GM12878 (cell line): ENCODE measurements at regions of chr1 and their contacts with region 1.

Region 1: GRCh38 chr1:27257155-27257554 is 22.7 kb downstream of the WDTC1 start:
- DNase-seq: no peak
- ATAC-seq: no peak
- H3K4me3 ChIP-seq: no peak overlapping the region
- H3K27ac ChIP-seq: no peak overlapping the region
- H3K4me1 ChIP-seq: peaks cover 26% of the 10 kb centered on the region
- H3K27me3 ChIP-seq: no peaks in the 10 kb centered on the region
- CTCF ChIP-seq: no peak
- EP300 ChIP-seq: no peak
- POLR2A ChIP-seq: no peak
- RAD21 ChIP-seq: no peak

Region 2: DNA sequence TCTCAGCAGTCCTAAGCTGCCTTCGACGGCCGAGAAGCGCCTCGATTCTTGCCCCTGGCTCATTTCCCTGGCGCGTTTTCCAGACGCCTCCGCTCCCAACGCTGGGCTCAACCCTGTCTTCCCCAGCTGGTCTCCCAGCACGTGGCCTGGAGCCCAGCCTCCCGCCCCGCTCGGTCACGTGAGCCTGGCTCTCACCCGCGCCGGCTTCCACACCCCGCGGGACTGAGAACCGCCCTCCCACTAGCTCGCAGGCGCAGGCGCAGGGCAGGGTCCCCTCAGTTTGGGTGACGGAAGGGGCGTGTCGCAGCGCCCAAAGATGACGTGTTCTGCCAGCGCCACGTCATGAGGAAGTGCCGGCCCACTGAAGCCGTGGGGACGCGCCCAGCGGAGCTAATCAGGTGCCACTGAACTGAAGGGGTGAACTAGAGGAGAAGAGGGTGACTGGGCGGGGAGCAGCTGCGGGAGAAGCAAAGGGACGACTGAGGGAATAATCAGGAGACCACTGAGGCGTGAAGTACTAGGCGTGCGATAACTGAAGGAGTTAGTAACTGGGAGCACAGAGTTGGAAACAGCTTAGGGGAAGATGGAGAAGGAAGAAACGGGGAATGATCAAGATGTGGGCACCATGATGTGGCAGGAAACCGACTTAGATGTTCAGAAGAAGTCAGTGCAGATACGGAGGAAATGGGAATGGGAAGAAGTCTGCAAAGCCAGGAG is 825.0 kb before region 1 on chr1 and contains the start of gene DHDDS:
- CTCF ChIA-PET with region 1: no interaction called
- POLR2A ChIA-PET with region 1: no interaction called
- RAD21 ChIA-PET with region 1: no interaction called
- SMC1A ChIA-PET with region 1: no interaction called
- in situ Hi-C with region 1: no loop called
- intact Hi-C with region 1: no loop called
- DNase-seq: peak; percentile 95
- ATAC-seq: peak; percentile 99
- H3K4me3 ChIP-seq: peak within 1 kb of the TSS; percentile 98
- H3K27ac ChIP-seq: peak within 1 kb of the TSS; percentile 59
- H3K4me1 ChIP-seq: peaks cover 9% of the 10 kb centered on the region
- H3K27me3 ChIP-seq: no peaks in the 10 kb centered on the region
- CTCF ChIP-seq: no peak
- EP300 ChIP-seq: no peak
- POLR2A ChIP-seq: peak; percentile 96
- RAD21 ChIP-seq: no peak
- polyA plus RNA-seq, gene DHDDS: 22.7 to 27.2 TPM

Region 3: DNA sequence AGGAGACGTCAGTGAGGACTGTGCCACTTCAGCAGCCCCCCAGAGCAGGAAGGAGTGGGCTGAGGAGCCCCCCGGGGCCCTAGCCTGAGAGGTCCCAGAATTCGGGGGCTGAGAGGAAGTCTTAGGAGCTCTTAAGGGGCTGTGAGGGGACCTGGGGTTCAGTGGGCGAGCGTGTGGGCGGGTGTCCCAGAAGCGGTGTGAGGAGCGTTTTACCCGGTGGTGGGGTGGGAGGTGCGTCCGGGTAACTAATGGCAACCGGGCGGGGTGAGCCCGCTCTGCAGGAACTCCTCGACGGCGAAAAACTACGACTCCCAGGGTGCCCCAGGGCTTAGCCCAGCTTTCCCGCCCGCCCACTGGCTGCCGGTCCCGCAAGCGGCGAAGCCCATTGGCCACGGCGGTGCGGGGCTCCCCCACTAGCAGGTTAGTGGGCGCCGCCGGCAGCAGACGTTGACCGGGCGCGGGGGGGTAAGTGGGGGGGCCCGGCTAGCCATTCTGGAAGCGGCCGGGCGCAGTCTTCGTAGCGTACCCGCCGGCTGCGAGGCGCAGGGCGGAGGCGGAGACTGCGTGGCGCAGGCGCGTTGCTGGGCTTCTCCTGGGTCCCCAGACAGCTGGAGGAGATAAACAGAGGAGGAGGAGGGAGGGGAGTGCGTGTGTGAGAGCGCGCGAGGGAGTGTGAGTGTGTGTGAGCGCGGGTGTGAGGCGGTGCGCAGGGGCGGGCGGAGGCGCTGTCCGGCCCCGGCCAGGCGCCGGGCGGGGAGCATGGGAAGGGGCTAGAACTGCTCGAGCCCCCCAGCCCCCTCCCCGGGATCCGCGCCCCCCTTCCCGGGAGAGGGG is 22.9 kb before region 1 on chr1 and contains the start of gene WDTC1:
- CTCF ChIA-PET with region 1: interaction called, 3 read pairs
- POLR2A ChIA-PET with region 1: interaction called, 9 read pairs
- RAD21 ChIA-PET with region 1: interaction called, 8 read pairs
- SMC1A ChIA-PET with region 1: interaction called, 21 read pairs
- in situ Hi-C with region 1: no loop called
- intact Hi-C with region 1: loop called (anchors 2 kb)
- DNase-seq: peak; percentile 79
- ATAC-seq: peak; percentile 97
- H3K4me3 ChIP-seq: peak within 1 kb of the TSS; percentile 79
- H3K27ac ChIP-seq: peak within 1 kb of the TSS; percentile 55
- H3K4me1 ChIP-seq: peaks cover 12% of the 10 kb centered on the region
- H3K27me3 ChIP-seq: no peaks in the 10 kb centered on the region
- CTCF ChIP-seq: no peak
- EP300 ChIP-seq: no peak
- POLR2A ChIP-seq: peak; percentile 79
- RAD21 ChIP-seq: no peak
- polyA plus RNA-seq, gene WDTC1: 0.21 to 0.26 TPM

Region 4: DNA sequence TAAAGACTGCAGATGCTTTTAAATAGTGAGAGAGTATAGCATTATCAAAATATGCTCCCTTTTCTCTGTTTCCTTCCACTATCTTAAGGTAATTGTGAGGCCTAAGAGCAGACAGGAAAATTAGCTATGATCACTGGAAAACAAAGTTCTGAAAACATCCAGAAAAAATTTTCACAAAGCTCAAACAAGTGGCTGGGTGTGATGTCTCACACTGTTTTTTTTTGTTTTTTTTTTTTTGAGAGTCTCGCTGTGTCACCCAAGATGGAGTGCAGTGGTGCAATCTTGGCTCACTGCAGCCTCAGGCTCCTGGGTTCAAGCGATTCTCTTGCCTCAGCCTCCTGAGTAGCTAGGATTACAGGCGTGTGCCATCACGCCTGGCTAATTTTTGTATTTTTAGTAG is 15.5 kb before region 1 on chr1:
- CTCF ChIA-PET with region 1: interaction called, 9 read pairs
- POLR2A ChIA-PET with region 1: interaction called, 9 read pairs
- RAD21 ChIA-PET with region 1: interaction called, 6 read pairs
- SMC1A ChIA-PET with region 1: interaction called, 33 read pairs
- in situ Hi-C with region 1: no loop called
- intact Hi-C with region 1: no loop called
- DNase-seq: no peak
- ATAC-seq: no peak
- H3K4me3 ChIP-seq: no peak overlapping the region
- H3K27ac ChIP-seq: no peak overlapping the region
- H3K4me1 ChIP-seq: peaks cover 5% of the 10 kb centered on the region
- H3K27me3 ChIP-seq: no peaks in the 10 kb centered on the region
- CTCF ChIP-seq: no peak
- EP300 ChIP-seq: no peak
- POLR2A ChIP-seq: no peak
- RAD21 ChIP-seq: no peak